ENCODE measurements at regions of chr16 and their contacts with region 1.

Region 1: DNA sequence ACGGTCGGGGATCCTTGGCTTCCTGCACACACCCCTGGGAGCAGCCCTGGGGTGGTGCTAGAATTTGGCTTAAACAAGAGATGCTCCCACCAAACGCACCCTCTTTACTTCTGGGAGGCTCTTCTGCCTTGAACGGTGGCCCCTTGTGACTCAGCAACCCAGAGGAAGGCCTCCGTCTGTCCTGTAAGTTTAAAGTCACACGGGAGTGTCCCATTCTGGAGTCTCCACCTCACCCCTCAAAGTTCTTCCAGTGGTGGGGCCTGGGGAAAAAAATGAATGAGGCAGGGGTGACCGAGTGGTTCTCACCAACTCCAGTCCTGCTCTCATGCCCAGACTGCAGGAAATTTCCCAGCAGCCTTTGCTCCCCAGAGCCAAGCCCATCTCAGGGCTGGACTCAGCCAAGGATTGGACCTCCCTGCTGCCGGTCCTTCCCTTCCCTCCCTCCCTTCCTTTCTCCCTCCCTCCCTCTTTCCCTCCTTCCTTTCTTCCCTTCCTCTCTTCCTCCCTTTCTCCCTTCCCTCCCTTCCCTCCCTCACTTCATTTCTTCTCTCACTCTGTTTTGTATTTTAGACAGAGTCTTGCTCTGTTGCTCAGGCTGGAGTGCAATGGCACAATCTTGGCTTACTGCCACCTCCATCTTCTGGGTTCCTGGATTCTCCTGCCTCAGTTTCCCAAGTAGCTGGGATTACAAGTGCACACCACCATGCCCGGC is 11.4 kb downstream of the ITGAD start:
- DNase-seq: no peak
- ATAC-seq: peak; percentile 16

Region 2: DNA sequence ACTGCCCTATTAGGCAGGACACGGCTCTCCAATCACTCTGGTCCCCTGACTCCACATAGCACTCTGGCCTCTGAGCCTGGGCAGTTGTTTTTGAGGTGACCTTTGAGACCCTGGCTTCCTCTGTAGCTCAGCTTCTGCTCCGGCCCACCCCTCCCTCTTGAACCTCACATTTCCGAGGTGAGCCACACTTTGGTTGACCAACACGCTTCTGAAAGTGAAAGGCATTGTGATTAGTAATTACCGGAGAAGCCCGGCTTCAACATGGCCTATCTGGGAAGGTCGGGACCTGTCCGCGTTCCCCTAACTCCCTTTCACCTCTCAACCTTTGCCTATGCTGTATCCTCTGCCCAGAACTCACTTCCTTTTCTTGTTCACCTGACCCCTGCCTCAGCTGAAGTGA is 59.8 kb before region 1 on chr16:
- intact Hi-C with region 1: loop called (anchors 10 kb)
- DNase-seq: no peak
- ATAC-seq: no peak

Region 3: GRCh38 chr16:31427441-31428278 is 23.2 kb after region 1 on chr16:
- intact Hi-C with region 1: no loop called
- DNase-seq: peak; percentile 89
- ATAC-seq: peak; percentile 50